Activated CD8-positive, alpha-beta T cell treated with anti-CD3 and anti-CD28 coated beads, Interleukin-2, amount 10 ng/mL, durations not matched to agents 7 days and 5 days (primary cell): ENCODE measurements at regions of chr12 and their contacts with region 1.

Region 1: DNA sequence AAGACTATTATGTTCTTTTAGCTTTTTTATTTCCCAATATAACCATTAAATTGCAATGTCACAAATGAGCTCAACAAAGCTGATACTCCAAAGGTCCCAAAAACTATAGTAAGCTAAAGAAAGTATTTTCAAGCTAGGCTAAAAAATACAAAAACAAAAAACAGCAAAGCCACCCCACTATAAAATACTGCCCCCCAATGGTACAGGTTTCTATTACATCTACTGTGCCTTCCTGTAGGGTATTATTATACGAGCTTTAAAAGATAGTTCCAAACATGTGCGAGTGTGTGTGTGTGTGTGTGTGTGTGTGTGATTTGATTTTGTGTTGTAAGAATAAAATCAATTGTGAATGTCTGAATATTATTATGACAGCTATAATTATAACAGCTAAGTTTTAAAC is 1.1 kb downstream of the IFNG start:
- DNase-seq: peak; percentile 55
- ATAC-seq: peak; percentile 34
- H3K4me3 Mint-ChIP-seq: peak overlapping the region; percentile 60
- H3K27ac Mint-ChIP-seq: peak overlapping the region; percentile 28
- H3K4me1 Mint-ChIP-seq: peaks cover 44% of the 10 kb centered on the region
- H3K27me3 Mint-ChIP-seq: no peaks in the 10 kb centered on the region

Region 2: DNA sequence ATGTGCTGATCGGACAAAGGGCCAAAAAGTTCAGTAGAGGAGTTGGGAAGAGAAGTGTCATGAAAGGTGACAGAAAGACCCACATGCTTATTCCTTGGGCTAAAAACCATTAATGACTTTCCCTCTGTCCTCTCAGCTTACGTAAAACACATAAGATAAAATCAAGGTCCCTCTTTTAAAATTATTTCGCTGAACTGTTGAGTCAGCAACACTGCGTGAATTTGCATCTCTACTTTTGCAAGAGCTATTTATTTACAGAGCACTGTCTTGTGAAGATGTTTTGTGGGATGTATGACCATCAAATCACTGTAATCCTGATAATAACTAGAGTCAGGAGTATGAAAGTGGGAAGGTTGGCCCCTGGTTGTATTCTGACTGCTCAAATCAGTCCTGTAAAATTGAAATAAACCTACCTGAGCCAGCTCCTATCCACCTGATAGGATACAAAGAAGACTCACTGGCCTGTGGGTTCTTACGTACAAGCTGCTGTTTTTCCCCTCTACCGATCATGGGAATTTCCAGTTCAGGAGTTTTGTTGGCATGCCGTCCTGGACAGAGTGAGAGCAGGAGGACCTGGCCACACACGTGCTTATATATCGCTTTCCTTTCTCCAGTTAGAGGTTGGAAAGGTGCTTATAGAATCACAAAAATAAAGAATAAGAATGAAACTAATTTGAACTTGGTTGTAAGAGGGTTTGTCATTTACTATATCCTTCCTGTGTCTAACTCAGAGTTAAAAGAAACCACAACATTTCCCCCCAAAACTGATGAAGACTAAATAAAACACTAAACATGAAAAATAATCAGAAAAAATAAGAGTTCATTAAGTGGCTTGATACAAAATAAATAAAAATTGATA is 126.3 kb before region 1 on chr12:
- CTCF ChIA-PET with region 1: interaction called, 223 read pairs
- POLR2A ChIA-PET with region 1: no interaction called
- DNase-seq: no peak
- ATAC-seq: peak; percentile 43
- H3K4me3 Mint-ChIP-seq: peak overlapping the region; percentile 73
- H3K27ac Mint-ChIP-seq: peak overlapping the region; percentile 87
- H3K4me1 Mint-ChIP-seq: peaks cover 54% of the 10 kb centered on the region
- H3K27me3 Mint-ChIP-seq: no peaks in the 10 kb centered on the region

Region 3: GRCh38 chr12:68067762-68068376 is 90.6 kb before region 1 on chr12:
- CTCF ChIA-PET with region 1: interaction called, 44 read pairs
- POLR2A ChIA-PET with region 1: no interaction called
- DNase-seq: no peak
- ATAC-seq: no peak
- H3K4me3 Mint-ChIP-seq: no peak overlapping the region
- H3K27ac Mint-ChIP-seq: no peak overlapping the region
- H3K4me1 Mint-ChIP-seq: peaks cover 10% of the 10 kb centered on the region
- H3K27me3 Mint-ChIP-seq: no peaks in the 10 kb centered on the region

Region 4: GRCh38 chr12:68131869-68132405 is 26.5 kb before region 1 on chr12:
- CTCF ChIA-PET with region 1: interaction called, 19 read pairs
- POLR2A ChIA-PET with region 1: interaction called, 3 read pairs
- DNase-seq: no peak
- ATAC-seq: no peak
- H3K4me3 Mint-ChIP-seq: no peak overlapping the region
- H3K27ac Mint-ChIP-seq: no peak overlapping the region
- H3K4me1 Mint-ChIP-seq: peaks cover 37% of the 10 kb centered on the region
- H3K27me3 Mint-ChIP-seq: no peaks in the 10 kb centered on the region

Region 5: GRCh38 chr12:68175557-68176061 is 17.2 kb after region 1 on chr12:
- CTCF ChIA-PET with region 1: interaction called, 22 read pairs
- POLR2A ChIA-PET with region 1: interaction called, 3 read pairs
- DNase-seq: peak; percentile 74
- ATAC-seq: peak; percentile 81
- H3K4me3 Mint-ChIP-seq: peak overlapping the region; percentile 57
- H3K27ac Mint-ChIP-seq: peak overlapping the region; percentile 81
- H3K4me1 Mint-ChIP-seq: peaks cover 61% of the 10 kb centered on the region
- H3K27me3 Mint-ChIP-seq: no peaks in the 10 kb centered on the region

Region 6: DNA sequence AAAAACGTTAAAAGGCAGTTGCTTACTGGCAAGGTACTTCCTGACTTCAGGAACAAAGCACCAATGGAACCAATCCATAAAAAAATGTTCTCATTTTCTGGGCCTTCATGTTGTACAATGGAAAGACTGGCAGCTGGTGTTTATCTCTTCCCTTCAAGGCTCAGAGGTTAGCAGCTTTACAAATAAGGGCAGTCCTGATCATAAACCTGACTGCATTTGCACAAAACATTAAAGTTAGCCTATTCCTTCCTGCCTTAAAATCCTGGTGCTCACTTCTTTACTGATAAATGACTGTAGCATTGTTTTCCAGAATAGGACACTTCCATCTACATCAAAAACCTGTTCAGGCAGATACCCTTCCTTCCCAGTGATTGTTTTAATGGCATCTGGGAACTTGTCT is 48.0 kb after region 1 on chr12:
- CTCF ChIA-PET with region 1: no interaction called
- POLR2A ChIA-PET with region 1: no interaction called
- DNase-seq: no peak
- ATAC-seq: no peak
- H3K4me3 Mint-ChIP-seq: no peak overlapping the region
- H3K27ac Mint-ChIP-seq: no peak overlapping the region
- H3K4me1 Mint-ChIP-seq: peaks cover 24% of the 10 kb centered on the region
- H3K27me3 Mint-ChIP-seq: peaks cover 12% of the 10 kb centered on the region